Sciatic nerve (tissue), 2 donors: ENCODE measurements at regions of chr7 and their contacts with region 1.

Region 1: DNA sequence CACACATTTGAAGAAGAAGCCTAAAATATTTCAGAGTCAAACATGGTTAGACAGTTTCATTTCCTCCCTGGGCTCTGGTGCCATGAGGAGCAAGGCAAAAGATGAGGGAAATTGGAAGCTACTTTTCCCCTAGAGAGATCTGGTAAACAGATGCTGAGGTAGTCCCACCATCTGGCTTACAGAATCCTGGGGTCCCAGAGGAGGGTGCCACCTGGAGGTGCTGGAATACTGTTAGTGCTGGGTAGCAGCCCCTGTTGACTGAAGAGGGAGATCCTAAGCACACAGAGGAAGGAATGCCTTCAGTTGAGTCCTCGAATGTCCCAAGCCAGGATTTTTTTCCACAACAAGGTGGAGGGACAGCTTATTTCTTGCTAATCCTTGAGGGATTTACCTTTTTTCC is 160.1 kb downstream of the FZD1 start:
- DNase-seq: no peak
- ATAC-seq: peak; percentile 28

Region 2: GRCh38 chr7:90266808-90267207 is 1157.6 kb before region 1 on chr7:
- intact Hi-C with region 1: loop called (anchors 5 kb)
- DNase-seq: no peak
- ATAC-seq: peak; percentile 81

Region 3: DNA sequence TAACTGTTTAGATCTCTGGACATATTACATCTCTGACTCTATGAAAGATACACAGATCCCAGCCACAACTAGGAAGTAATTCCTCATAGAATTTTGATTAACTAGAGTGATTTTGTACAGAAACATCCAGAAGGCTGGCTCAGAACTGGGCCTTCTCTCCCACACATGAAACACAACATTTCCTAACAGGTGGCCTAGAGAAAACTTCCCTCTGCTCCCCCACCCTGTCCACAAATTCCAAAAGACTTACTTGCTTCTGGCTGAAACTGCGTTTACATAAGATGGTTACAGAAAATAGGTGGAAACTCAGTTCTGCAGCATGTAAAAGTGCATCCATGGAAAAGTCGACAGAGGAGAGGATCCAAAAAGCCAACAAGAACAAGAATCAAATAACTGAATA is 27.3 kb before region 1 on chr7:
- intact Hi-C with region 1: no loop called
- DNase-seq: no peak
- ATAC-seq: no peak